HepG2 (cell line): ENCODE measurements at regions of chr20 and their contacts with region 1.

Region 1: DNA sequence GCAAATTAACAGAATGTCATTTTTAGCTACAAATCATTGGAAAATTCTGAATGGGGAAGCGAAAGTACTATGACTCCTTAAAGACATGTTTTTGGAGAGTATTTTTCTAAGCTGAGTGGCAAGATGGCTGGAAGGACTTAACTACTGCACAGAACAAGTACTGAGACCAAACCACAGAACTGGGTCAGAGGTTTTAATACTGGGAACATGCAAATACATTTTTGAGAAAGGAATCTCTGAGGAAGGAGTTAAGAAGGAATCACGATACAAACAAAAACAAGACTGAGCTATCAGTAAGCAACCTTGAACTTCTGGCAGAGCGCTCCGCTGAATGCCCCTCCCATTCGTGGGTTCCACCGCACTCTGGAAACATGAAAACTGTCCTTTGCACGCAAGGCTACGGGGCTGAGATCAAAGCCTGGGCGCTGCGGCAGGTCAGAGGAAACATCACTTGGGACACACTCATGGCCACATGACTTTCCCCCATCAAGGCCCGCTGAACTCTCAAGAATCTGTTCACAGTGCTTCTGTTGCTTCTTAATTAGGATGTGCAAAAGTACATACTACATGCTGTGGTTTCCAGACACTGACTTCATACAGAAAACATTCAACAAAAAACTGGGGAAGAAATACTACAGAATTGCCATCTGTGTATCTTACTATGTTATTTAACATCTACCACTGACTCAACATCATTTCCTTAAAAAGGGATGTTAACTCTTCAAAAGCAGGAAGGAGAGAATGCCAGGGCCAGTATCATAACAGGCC is 27.8 kb downstream of the SLC23A2 start:
- DNase-seq: peak; percentile 99
- ATAC-seq: peak; percentile 98
- H3K4me3 ChIP-seq: peak overlapping the region; percentile 17 to 43 (median 38); a peak in 5 of 6 replicates
- H3K27ac ChIP-seq: peak overlapping the region; percentile 69
- H3K4me1 ChIP-seq: peaks cover 96% of the 10 kb centered on the region
- H3K27me3 ChIP-seq: no peaks in the 10 kb centered on the region
- CTCF ChIP-seq: peak; percentile 38
- EP300 ChIP-seq: peak; percentile 97 to 99
- POLR2A ChIP-seq: 0 out of 4 replicates have a peak, but pooled peaks of 1 of the 2 experiments have one; percentile 30
- RAD21 ChIP-seq: peak; percentile 44; the same call in 1 of the 2 replicates

Region 2: DNA sequence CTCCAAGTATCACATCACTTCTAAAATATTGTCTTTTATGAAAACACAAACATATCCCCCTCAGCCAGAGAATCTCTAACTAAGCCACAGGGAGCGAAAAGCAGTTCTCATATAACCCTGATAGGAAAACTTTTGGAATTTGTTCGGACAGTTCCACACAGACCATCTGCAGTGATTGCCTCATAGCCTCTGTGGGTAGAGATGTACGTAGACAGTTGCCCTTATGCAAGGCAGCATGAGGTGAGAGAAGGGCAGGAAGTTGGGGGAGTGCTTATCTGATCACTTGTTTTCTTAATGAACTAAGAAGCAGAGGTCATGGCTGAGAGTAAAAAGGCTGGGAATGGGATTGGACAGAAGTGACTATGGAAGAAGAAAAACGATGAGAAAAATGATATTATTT is 11.8 kb before region 1 on chr20:
- CTCF ChIA-PET with region 1: no interaction called
- POLR2A ChIA-PET with region 1: interaction called, 17 read pairs
- in situ Hi-C with region 1: no loop called
- intact Hi-C with region 1: no loop called
- DNase-seq: peak; percentile 99
- ATAC-seq: peak; percentile 96
- H3K4me3 ChIP-seq: peak overlapping the region in 2 of 3 experiments; percentile 2 to 26; a peak in 1 of 6 replicates
- H3K27ac ChIP-seq: peak overlapping the region; percentile 81
- H3K4me1 ChIP-seq: peaks cover 87% of the 10 kb centered on the region
- H3K27me3 ChIP-seq: no peaks in the 10 kb centered on the region
- CTCF ChIP-seq: 0 out of 2 replicates have a peak, but pooled peaks have one; percentile 17
- EP300 ChIP-seq: peak; percentile 93 to 98
- POLR2A ChIP-seq: peak in 1 of 2 experiments; percentile 44; a peak in 1 of 4 replicates
- RAD21 ChIP-seq: no peak

Region 3: DNA sequence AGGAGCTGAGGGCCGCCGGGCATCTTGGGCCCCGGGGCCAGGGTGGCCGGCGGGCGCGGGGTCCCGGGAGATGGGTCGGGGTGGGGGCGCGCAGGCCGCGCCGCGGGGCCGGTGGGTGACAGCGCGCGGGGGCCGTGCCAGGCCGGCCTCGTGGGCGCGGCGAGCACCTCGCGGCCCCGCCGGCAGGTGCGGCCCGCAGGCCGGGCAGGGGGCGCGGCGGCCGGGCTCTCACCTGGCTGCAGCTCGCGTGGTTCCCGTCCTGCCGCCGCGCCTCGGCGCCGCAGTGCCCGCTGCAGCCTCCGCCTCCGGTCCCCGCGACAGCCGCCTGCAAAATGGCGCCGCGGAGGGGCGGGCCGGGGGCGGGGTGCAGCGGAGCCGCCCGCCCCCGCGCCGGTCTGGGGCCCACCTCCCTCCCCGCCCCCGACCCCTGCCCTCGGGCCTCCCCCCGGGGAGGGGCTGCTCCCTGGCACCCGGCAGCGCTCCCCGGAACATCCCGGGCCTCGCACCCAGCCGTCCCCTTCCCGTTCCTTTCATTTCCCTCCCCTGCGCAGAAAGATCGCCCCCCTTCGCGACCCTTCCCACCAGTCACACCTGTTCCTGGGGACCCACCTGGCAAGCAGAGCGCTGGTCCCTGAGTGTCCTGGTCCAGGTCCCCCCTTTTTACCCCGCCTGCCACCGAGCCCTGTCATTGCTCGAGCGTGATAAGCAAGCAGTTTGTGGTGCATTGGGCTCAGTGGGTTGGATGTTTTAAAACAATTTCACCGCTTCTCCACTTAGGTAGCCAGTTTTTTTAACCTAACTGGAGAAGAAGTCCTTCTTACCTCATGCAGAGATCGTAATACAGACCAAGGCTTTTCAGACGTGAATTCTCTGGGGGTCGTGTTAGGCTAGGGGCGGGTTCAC is 27.9 kb after region 1 on chr20 and contains the start of gene SLC23A2:
- CTCF ChIA-PET with region 1: no interaction called
- POLR2A ChIA-PET with region 1: interaction called, 5 read pairs
- in situ Hi-C with region 1: no loop called
- intact Hi-C with region 1: loop called (anchors 2 kb)
- DNase-seq: no peak
- ATAC-seq: peak; percentile 67
- H3K4me3 ChIP-seq: peak within 1 kb of the TSS; percentile 82 to 94 (median 92)
- H3K27ac ChIP-seq: peak within 1 kb of the TSS; percentile 45
- H3K4me1 ChIP-seq: peaks cover 59% of the 10 kb centered on the region
- H3K27me3 ChIP-seq: no peaks in the 10 kb centered on the region; a peak in 1 of 5 replicates
- CTCF ChIP-seq: 0 out of 2 replicates have a peak, but pooled peaks have one; percentile 17
- EP300 ChIP-seq: no peak
- POLR2A ChIP-seq: peak; percentile 18 to 79; a peak in 2 of 4 replicates
- RAD21 ChIP-seq: no peak; the same call in 1 of the 2 replicates
- total RNA-seq, gene SLC23A2: 26.2 and 42.2 TPM in 2 replicates

Region 4: GRCh38 chr20:5033571-5033970 is 60.1 kb after region 1 on chr20:
- CTCF ChIA-PET with region 1: no interaction called
- POLR2A ChIA-PET with region 1: interaction called, 3 read pairs
- in situ Hi-C with region 1: no loop called
- intact Hi-C with region 1: loop called (anchors 2 kb)
- DNase-seq: peak; percentile 52
- ATAC-seq: 0 out of 3 replicates have a peak, but pooled peaks have one; percentile 7
- H3K4me3 ChIP-seq: no peak overlapping the region
- H3K27ac ChIP-seq: peak overlapping the region; percentile 3
- H3K4me1 ChIP-seq: peaks cover 60% of the 10 kb centered on the region
- H3K27me3 ChIP-seq: no peaks in the 10 kb centered on the region
- CTCF ChIP-seq: no peak
- EP300 ChIP-seq: no peak
- POLR2A ChIP-seq: no peak
- RAD21 ChIP-seq: no peak

Region 5: DNA sequence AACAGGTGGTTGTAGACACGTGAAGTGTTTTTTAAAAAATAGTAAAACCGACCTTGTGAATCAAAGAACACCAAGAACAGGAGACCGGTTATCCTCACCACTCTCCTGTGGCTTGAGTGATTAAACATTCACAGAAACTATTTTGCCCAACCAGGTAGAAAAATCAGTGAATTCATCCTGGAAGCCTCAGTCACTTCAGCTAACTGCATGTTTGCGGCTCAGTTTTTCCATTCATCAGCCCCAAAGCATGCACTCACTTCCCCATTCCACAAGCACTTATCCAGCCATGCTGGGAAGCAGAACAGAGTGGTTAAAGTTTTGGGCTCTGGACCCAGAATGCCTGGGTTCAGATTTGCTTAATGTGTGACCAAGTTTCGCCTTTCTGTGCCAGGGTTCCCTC is 1078.0 kb after region 1 on chr20:
- CTCF ChIA-PET with region 1: no interaction called
- POLR2A ChIA-PET with region 1: no interaction called
- in situ Hi-C with region 1: no loop called
- intact Hi-C with region 1: no loop called
- DNase-seq: peak; percentile 33
- ATAC-seq: no peak
- H3K4me3 ChIP-seq: peak overlapping the region in 1 of 3 experiments; percentile 47; a peak in 1 of 6 replicates
- H3K27ac ChIP-seq: no peak overlapping the region
- H3K4me1 ChIP-seq: peaks cover 43% of the 10 kb centered on the region
- H3K27me3 ChIP-seq: peaks cover 1 to 8% of the 10 kb centered on the region in 2 experiments; a peak in 1 of 5 replicates
- CTCF ChIP-seq: no peak
- EP300 ChIP-seq: no peak
- POLR2A ChIP-seq: no peak
- RAD21 ChIP-seq: no peak